ENCODE measurements at regions of chr11 and their contacts with region 1.

Region 1: DNA sequence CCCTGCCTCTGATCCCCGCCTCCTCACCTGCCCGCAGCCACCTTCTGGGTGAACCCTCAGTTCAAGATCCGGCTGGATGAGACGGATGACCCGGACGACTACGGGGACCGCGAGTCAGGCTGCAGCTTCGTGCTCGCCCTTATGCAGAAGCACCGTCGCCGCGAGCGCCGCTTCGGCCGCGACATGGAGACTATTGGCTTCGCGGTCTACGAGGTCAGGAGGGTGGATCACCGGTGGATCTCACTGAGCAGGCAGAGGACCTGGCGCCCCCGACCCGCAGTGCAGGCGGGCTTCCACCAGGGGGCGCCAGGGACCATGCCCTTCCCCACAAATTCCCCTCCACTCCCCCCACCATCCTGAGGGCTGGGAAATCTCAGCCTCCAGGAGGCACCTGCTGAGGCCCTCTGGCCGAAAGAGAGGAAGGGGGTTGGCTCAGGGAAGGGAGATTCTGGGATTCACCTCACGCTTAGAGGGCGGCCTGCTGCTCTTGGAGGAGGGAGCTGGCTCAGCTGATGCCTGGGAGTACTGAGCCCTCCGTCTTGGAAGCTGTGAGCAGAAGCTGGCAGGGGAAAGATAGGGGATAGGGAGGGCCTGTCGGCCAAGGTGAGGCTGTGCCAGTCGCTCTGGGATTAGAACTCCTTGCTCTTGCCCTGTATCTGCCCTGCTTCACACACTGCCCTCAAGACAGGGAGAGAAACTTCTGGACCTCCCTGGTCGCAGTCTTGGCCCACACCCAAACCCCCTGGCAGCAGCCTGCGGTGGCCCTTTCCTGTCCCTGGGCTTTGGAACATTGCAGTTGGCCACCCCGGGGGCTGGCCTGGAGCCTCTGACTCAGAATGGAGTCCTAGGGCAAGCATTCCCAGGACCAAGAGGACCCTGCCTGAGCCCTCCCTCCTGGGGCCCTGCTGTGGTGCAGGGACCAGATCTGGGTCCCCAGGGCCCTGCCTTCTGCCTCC is 23.2 kb downstream of the CAPN1 start:
- DNase-seq: no peak
- H3K4me3 ChIP-seq: no peak overlapping the region
- H3K27ac ChIP-seq: no peak overlapping the region
- H3K4me1 ChIP-seq: peaks cover 14% of the 10 kb centered on the region
- H3K27me3 ChIP-seq: no peaks in the 10 kb centered on the region
- CTCF ChIP-seq: peak; percentile 83

Region 2: DNA sequence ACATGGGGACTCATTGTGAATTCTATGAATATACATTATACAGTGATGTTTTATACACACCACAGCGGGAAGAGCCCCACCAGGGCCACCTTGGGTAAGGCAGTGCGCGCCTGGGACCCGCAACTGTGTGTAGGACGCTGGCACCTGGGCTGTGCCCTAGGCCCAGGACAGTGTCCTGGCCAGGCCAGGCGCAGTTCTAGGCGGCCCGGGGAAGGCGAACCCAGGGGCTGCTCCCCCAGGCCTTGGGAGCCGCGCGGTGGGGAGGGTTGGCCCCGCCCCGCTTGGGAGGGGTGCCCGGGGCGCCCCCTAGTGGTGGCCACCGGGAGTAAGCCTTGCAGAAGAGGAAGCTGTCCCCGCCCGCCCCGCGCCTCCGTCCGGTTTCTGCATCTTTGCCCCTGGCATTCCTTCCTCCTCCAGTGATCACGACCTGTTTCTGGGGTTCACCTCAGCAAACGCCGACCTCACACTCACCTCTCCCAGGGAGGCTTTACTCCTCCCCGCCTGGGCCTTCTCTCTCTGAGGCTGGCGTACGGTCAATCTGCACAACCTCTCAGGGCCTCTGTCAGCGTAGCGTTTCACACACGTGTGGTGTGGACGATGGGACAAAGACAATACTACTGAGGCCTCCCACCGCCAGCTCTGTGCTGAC is 317.0 kb before region 1 on chr11:
- intact Hi-C with region 1: no loop called
- DNase-seq: peak; percentile 92
- H3K4me3 ChIP-seq: no peak overlapping the region
- H3K27ac ChIP-seq: peak overlapping the region; percentile 94
- H3K4me1 ChIP-seq: no peaks in the 10 kb centered on the region
- H3K27me3 ChIP-seq: no peaks in the 10 kb centered on the region
- CTCF ChIP-seq: peak; percentile 99

Region 3: GRCh38 chr11:64989416-64989815 is 215.5 kb before region 1 on chr11:
- intact Hi-C with region 1: no loop called
- DNase-seq: no peak
- H3K4me3 ChIP-seq: no peak overlapping the region
- H3K27ac ChIP-seq: no peak overlapping the region
- H3K4me1 ChIP-seq: no peaks in the 10 kb centered on the region
- H3K27me3 ChIP-seq: no peaks in the 10 kb centered on the region
- CTCF ChIP-seq: no peak

Region 4: GRCh38 chr11:65251476-65251875 is 46.6 kb after region 1 on chr11:
- intact Hi-C with region 1: loop called (anchors 10 kb)
- DNase-seq: no peak
- H3K4me3 ChIP-seq: no peak overlapping the region
- H3K27ac ChIP-seq: no peak overlapping the region
- H3K4me1 ChIP-seq: no peaks in the 10 kb centered on the region
- H3K27me3 ChIP-seq: no peaks in the 10 kb centered on the region
- CTCF ChIP-seq: no peak

Region 5: DNA sequence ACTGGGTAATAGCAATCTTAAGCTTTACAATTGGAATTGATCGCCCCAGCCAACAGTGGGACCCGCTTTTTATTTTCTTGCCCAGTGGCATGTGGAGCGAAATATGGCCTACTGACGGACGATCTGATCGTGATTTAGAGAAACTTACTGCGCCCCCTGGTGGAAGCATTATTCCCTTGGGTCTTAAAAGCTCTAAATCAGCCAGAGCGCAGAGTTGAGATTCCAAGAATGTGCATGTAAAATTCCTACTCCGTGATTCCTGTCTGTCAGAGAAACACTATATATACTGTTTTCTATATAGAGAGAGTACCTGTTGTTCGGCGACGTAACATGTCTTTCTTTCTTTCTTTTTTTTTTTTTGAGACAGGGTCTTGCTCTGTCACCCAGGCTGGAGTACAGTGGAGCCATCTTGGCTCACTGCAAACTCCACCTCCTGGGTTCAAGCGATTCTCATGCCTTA is 125.0 kb after region 1 on chr11:
- intact Hi-C with region 1: loop called (anchors 10 kb)
- DNase-seq: peak; percentile 96
- H3K4me3 ChIP-seq: no peak overlapping the region
- H3K27ac ChIP-seq: no peak overlapping the region
- H3K4me1 ChIP-seq: no peaks in the 10 kb centered on the region
- H3K27me3 ChIP-seq: no peaks in the 10 kb centered on the region
- CTCF ChIP-seq: peak; percentile 76